ENCODE measurements at regions of chr2 and their contacts with region 1.

Region 1: GRCh38 chr2:213151437-213152064 is at the start of gene IKZF2:
- DNase-seq: peak; percentile 79
- H3K4me3 ChIP-seq: peak within 1 kb of the TSS; percentile 78
- H3K27ac ChIP-seq: peak within 1 kb of the TSS; percentile 90
- H3K4me1 ChIP-seq: no peaks in the 10 kb centered on the region
- H3K27me3 ChIP-seq: no peaks in the 10 kb centered on the region
- CTCF ChIP-seq: no peak
- total RNA-seq, gene IKZF2: 4.5 to 4.8 TPM

Region 2: GRCh38 chr2:212686285-212686895 is 465.2 kb before region 1 on chr2:
- intact Hi-C with region 1: loop called (anchors 5 kb)
- DNase-seq: peak; percentile 45
- H3K4me3 ChIP-seq: no peak overlapping the region
- H3K27ac ChIP-seq: no peak overlapping the region
- H3K4me1 ChIP-seq: no peaks in the 10 kb centered on the region
- H3K27me3 ChIP-seq: no peaks in the 10 kb centered on the region
- CTCF ChIP-seq: peak; percentile 89

Region 3: DNA sequence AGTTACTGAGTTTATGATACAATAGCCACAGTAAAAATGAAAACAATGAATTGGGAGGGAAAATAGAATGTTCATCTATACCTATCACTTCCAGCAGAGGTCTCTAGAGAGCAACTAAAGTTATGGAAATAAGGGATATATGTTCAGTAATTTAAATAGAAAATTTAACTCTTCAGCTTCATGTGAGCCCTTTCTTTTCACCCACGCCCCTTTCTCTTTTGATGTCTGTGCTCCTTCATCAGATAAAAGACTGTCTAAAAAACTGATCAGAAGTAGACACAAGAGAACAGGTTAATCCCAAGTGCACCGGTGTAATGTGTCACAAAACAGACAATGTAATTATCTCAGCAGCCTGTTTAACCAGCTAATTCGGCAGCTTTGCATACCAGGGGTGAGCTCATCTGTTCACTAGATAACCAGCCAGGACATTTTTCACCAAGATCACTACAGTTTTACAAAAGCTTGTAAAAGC is 374.5 kb before region 1 on chr2:
- intact Hi-C with region 1: loop called (anchors 2 kb)
- DNase-seq: no peak
- H3K4me3 ChIP-seq: no peak overlapping the region
- H3K27ac ChIP-seq: no peak overlapping the region
- H3K4me1 ChIP-seq: no peaks in the 10 kb centered on the region
- H3K27me3 ChIP-seq: no peaks in the 10 kb centered on the region
- CTCF ChIP-seq: peak; percentile 53

Region 4: GRCh38 chr2:212863185-212863588 is 288.4 kb before region 1 on chr2:
- intact Hi-C with region 1: loop called (anchors 5 kb)
- DNase-seq: peak; percentile 47
- H3K4me3 ChIP-seq: no peak overlapping the region
- H3K27ac ChIP-seq: no peak overlapping the region
- H3K4me1 ChIP-seq: no peaks in the 10 kb centered on the region
- H3K27me3 ChIP-seq: no peaks in the 10 kb centered on the region
- CTCF ChIP-seq: peak; percentile 69

Region 5: DNA sequence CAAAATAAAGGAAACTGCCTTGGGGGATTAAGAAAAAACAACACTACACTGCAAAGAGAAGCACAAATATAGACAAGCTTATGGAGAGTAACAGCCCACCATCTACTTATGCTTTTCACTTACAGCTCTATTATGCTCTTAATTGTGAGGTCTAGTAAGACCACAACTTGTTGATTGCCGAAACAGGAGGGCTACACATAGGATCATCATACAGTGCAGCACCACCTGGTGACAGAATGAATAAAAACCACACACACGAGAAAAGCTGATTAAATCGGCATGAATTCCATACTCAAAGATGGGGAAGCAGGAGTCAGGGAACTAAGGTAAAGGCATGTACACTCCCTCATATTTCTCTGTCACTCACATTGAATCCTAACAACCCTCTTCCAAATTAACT is 259.4 kb before region 1 on chr2:
- intact Hi-C with region 1: loop called (anchors 10 kb)
- DNase-seq: no peak
- H3K4me3 ChIP-seq: no peak overlapping the region
- H3K27ac ChIP-seq: no peak overlapping the region
- H3K4me1 ChIP-seq: no peaks in the 10 kb centered on the region
- H3K27me3 ChIP-seq: no peaks in the 10 kb centered on the region
- CTCF ChIP-seq: no peak

Region 6: GRCh38 chr2:213227458-213227857 is 75.9 kb after region 1 on chr2:
- intact Hi-C with region 1: no loop called
- DNase-seq: no peak
- H3K4me3 ChIP-seq: no peak overlapping the region
- H3K27ac ChIP-seq: no peak overlapping the region
- H3K4me1 ChIP-seq: no peaks in the 10 kb centered on the region
- H3K27me3 ChIP-seq: no peaks in the 10 kb centered on the region
- CTCF ChIP-seq: no peak